OCI-LY7 (cell line): ENCODE measurements at regions of chr16 and their contacts with region 1.

Region 1: GRCh38 chr16:57535680-57536305 is 578 bp downstream of the CCDC102A start:
- DNase-seq: peak; percentile 93
- H3K4me3 ChIP-seq: peak overlapping the region; percentile 74
- H3K27ac ChIP-seq: peak overlapping the region; percentile 75
- H3K4me1 ChIP-seq: peaks cover 90% of the 10 kb centered on the region
- CTCF ChIP-seq: 0 out of 2 replicates have a peak, but pooled peaks have one; percentile 18

Region 2: DNA sequence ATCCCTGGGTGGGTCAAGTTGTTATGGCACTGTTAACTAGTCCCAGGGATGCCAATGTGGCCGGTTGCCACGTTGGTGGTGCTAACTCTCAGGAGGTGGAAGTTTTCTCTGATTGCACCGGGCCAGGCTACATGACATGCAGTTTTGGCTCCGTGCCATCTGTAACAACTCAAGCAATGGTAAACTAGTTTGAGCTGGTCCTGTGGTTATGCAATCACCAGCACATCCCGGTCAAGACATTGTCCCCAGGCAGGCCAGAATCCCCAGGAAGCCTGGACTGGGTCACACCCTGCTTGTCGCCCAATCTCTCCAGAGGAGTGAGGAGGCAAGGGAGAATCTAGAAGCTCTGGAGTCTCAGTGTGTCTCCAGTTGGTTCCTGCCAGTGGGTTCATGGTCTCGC is 141.3 kb before region 1 on chr16:
- CTCF ChIA-PET with region 1: no interaction called
- POLR2A ChIA-PET with region 1: no interaction called
- intact Hi-C with region 1: no loop called
- DNase-seq: no peak
- H3K4me3 ChIP-seq: no peak overlapping the region
- H3K27ac ChIP-seq: no peak overlapping the region
- H3K4me1 ChIP-seq: no peaks in the 10 kb centered on the region
- CTCF ChIP-seq: no peak

Region 3: DNA sequence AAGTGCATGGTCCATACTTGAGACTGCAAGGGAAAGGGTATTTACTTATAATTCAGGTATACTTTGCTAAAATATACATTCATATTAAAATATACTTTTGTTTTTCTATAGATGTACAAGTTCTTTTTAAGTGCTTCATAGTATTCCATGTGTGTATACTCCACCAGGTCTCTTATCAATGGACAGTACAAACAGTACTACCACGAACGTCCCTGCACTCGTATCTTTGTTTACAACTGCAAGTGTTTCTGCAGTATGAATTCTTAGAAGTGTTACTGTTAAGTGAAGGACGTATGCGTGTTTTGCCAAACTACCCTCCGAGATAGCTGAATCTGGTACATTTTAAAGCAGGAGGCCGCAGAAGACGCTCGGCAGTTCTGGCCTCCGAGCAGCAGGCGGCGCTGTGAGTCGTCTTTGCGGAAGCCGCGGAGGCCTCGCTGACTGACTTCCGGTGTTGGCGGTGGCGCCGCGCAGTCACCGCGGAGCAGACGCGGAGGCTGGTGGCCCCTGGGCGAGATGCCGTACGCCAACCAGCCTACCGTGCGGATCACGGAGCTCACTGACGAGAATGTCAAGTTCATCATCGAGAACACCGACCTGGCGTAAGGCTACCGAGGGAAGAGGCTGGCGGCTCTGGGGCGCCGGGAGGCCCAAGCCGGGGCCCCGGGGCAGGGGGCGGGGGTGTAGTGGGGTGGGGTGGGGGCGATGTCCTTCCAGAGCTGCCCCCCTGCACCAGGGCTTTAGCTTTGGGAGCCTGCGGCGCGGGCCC is 73.4 kb before region 1 on chr16 and contains the start of gene POLR2C:
- CTCF ChIA-PET with region 1: no interaction called
- POLR2A ChIA-PET with region 1: no interaction called
- intact Hi-C with region 1: loop called (anchors 5 kb)
- DNase-seq: peak; percentile 94
- H3K4me3 ChIP-seq: peak within 1 kb of the TSS; percentile 97
- H3K27ac ChIP-seq: no peak within 1 kb of the TSS
- H3K4me1 ChIP-seq: peaks cover 9% of the 10 kb centered on the region
- CTCF ChIP-seq: peak; percentile 90
- total RNA-seq, gene POLR2C: 98.1 and 101 TPM in 2 replicates

Region 4: GRCh38 chr16:57475711-57476339 is 60.0 kb before region 1 on chr16:
- CTCF ChIA-PET with region 1: no interaction called
- POLR2A ChIA-PET with region 1: no interaction called
- intact Hi-C with region 1: no loop called
- DNase-seq: peak; percentile 80
- H3K4me3 ChIP-seq: peak overlapping the region; percentile 18
- H3K27ac ChIP-seq: no peak overlapping the region
- H3K4me1 ChIP-seq: peaks cover 31% of the 10 kb centered on the region
- CTCF ChIP-seq: peak; percentile 90

Region 5: DNA sequence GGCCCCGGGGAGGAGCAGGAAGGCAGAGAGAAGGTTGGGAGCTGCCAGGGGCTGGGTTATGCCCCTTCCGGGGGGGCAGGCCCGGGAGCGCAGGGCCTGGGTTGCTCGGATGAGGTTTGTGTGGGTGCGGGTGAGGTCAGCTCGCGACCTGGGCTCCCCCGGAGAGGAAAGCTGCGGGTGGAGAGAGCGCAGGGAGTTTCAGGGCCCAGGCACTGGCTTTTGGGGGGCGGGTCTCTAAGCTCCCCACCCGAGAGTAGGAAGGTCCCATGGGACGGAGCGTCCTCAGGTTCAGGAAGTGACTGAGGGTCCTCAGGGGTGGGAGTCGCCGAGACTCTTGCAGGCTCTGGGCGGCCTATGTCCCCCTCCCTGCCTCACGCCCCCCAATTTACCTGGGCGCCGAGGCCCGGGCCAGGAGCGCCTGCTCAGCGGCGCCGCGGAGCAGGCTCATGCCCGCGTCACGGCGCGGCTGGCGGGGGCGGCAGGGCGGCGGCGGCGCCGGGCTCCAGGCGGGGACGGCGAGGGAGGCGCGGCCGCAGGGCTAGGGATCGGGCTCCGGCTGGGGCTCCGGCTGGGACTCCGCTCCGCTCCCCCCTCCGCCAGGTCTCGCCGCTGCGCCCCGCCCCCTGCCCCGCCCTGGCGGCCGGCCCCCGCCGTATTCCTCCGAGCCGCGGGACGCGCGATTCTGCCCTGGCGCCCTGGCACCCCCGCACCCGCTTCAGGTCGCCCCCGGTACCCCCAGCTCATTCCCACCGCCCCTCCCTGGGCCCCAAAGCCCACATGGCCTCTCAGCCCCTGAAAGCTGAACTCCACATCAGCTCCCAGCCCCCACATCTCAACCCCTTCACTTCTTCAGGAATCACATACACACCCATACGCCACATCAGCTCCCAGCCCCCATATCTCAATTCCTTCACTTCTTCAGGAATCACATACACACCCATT is 49.6 kb before region 1 on chr16 and contains the start of gene DOK4:
- CTCF ChIA-PET with region 1: no interaction called
- POLR2A ChIA-PET with region 1: no interaction called
- intact Hi-C with region 1: loop called (anchors 1 kb)
- DNase-seq: peak; percentile 69
- H3K4me3 ChIP-seq: peak within 1 kb of the TSS; percentile 65
- H3K27ac ChIP-seq: no peak within 1 kb of the TSS
- H3K4me1 ChIP-seq: peaks cover 5% of the 10 kb centered on the region
- CTCF ChIP-seq: no peak
- total RNA-seq, gene DOK4: 0.09 and 0.13 TPM in 2 replicates

Region 6: GRCh38 chr16:57519796-57520360 is 15.9 kb before region 1 on chr16:
- CTCF ChIA-PET with region 1: interaction called, 3 read pairs
- POLR2A ChIA-PET with region 1: interaction called, 14 read pairs
- intact Hi-C with region 1: no loop called
- DNase-seq: peak; percentile 79
- H3K4me3 ChIP-seq: no peak overlapping the region
- H3K27ac ChIP-seq: no peak overlapping the region
- H3K4me1 ChIP-seq: peaks cover 21% of the 10 kb centered on the region
- CTCF ChIP-seq: peak; percentile 99

Region 7: DNA sequence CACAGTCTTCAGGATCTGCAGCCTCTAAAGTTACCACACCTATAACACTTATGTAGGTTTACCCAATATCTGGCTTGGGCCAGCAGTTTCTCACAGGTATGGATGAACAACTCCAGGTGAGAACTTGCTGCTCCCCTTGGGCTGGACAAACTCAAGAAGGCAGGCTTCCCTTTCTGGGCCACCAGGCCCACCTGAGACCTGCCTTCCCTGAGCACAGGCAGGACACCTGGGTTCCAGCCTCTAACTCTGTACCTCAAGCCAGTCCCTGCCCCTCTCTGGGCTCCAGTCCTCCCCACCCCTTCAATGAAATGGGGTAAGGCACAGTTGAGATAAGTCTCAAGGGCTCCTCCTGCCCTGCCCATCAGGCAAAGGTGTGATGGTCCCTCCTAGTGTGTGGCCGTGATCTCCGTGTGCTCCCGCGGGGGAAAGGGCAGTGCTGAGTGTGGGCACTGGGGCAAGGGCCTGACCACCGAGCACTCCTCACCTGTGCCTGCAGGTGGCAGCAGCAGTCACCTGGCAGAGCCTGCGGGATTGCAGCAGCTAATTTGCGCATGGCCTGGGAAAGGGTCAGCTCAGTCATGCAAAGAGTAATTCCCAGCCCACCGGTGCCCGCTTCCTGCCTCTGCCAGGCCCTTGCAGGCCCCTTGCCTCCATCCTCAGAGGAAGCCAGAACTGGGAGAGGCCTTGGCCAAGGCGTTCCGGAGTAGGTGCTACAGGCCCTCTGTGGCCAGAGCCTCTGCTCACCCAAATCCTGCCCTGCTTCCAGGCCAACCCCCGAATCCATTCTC is 64.4 kb after region 1 on chr16:
- CTCF ChIA-PET with region 1: no interaction called
- POLR2A ChIA-PET with region 1: no interaction called
- intact Hi-C with region 1: no loop called
- DNase-seq: peak; percentile 47
- H3K4me3 ChIP-seq: no peak overlapping the region
- H3K27ac ChIP-seq: no peak overlapping the region
- H3K4me1 ChIP-seq: no peaks in the 10 kb centered on the region
- CTCF ChIP-seq: peak; percentile 81